Activated CD4-positive, alpha-beta memory T cell treated with anti-CD3 and anti-CD28 coated beads for 36 hours (primary cell): ENCODE measurements at regions of chr14 and their contacts with region 1.

Region 1: GRCh38 chr14:64303471-64303917 is 9.3 kb upstream of the ESR2 start:
- DNase-seq: no peak
- H3K4me3 Mint-ChIP-seq: no peak overlapping the region
- H3K27ac Mint-ChIP-seq: no peak overlapping the region
- H3K4me1 Mint-ChIP-seq: no peaks in the 10 kb centered on the region
- H3K27me3 Mint-ChIP-seq: peaks cover 6% of the 10 kb centered on the region

Region 2: GRCh38 chr14:63388763-63389431 is 914.6 kb before region 1 on chr14:
- CTCF ChIA-PET with region 1: no interaction called
- POLR2A ChIA-PET with region 1: no interaction called
- intact Hi-C with region 1: loop called (anchors 1 kb)
- DNase-seq: peak; percentile 76
- H3K4me3 Mint-ChIP-seq: no peak overlapping the region
- H3K27ac Mint-ChIP-seq: no peak overlapping the region
- H3K4me1 Mint-ChIP-seq: peaks cover under 1% of the 10 kb centered on the region
- H3K27me3 Mint-ChIP-seq: no peaks in the 10 kb centered on the region

Region 3: DNA sequence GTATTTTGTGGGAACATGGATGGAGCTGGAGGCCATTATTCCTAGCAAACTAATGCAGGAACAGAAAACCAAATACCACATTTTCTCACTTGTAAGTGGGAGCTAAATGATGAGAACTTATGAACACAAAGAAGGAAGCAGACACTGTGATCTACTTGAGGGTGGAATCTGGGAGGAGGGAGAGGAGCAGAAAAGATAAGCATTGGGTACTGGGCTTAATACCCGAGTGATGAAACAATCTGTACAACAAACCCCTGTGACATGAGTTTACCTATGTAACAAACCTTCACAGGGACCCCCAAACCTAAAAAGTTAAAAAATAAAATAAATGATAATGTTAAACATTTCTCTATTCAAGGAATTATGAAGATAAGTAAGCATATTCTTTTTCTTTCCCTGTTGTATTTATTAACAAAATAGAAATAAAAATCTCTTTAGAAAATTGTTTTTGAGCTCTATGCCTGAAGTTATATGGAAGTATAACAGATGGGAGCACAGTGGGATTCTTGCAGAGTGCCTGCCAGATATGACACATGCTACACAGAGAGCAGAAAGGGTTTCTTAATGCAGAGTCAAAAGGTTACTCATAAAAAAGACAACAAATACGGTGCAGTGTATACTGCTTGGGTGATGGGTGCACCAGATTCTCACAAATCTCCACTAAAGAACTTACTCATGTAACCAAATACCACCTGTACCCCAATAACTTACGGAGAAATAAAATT is 502.7 kb before region 1 on chr14:
- CTCF ChIA-PET with region 1: interaction called, 26 read pairs
- POLR2A ChIA-PET with region 1: no interaction called
- intact Hi-C with region 1: loop called (anchors 2 kb)
- DNase-seq: no peak
- H3K4me3 Mint-ChIP-seq: no peak overlapping the region
- H3K27ac Mint-ChIP-seq: no peak overlapping the region
- H3K4me1 Mint-ChIP-seq: no peaks in the 10 kb centered on the region
- H3K27me3 Mint-ChIP-seq: no peaks in the 10 kb centered on the region

Region 4: DNA sequence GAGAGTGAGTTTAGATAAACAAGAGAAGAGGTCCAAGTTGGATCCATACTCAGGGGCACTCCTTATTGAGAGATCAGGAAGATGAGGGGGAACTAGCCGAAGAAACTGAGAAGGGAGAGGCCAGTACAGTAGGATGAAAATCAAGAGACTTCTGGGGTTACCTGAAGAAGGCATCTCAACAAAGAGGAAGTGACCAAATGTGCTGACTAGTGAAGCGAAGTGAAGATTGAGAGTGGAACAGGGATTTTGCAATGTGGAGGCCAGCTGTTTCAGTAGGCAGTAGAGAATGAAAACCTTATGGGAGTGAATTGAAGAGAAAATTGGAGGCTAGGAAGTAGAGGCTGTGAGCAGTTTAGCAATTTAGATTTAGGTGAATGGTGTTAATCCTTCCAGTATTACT is 297.7 kb before region 1 on chr14:
- CTCF ChIA-PET with region 1: interaction called, 14 read pairs
- POLR2A ChIA-PET with region 1: no interaction called
- intact Hi-C with region 1: loop called (anchors 1 kb)
- DNase-seq: no peak
- H3K4me3 Mint-ChIP-seq: no peak overlapping the region
- H3K27ac Mint-ChIP-seq: no peak overlapping the region
- H3K4me1 Mint-ChIP-seq: no peaks in the 10 kb centered on the region
- H3K27me3 Mint-ChIP-seq: no peaks in the 10 kb centered on the region

Region 5: GRCh38 chr14:64012720-64013119 is 290.8 kb before region 1 on chr14:
- CTCF ChIA-PET with region 1: interaction called, 14 read pairs
- POLR2A ChIA-PET with region 1: no interaction called
- intact Hi-C with region 1: loop called (anchors 1 kb)
- DNase-seq: no peak
- H3K4me3 Mint-ChIP-seq: no peak overlapping the region
- H3K27ac Mint-ChIP-seq: no peak overlapping the region
- H3K4me1 Mint-ChIP-seq: peaks cover 9% of the 10 kb centered on the region
- H3K27me3 Mint-ChIP-seq: no peaks in the 10 kb centered on the region

Region 6: GRCh38 chr14:64178814-64179213 is 124.7 kb before region 1 on chr14:
- CTCF ChIA-PET with region 1: interaction called, 10 read pairs
- POLR2A ChIA-PET with region 1: no interaction called
- intact Hi-C with region 1: no loop called
- DNase-seq: no peak
- H3K4me3 Mint-ChIP-seq: no peak overlapping the region
- H3K27ac Mint-ChIP-seq: no peak overlapping the region
- H3K4me1 Mint-ChIP-seq: peaks cover 29% of the 10 kb centered on the region
- H3K27me3 Mint-ChIP-seq: no peaks in the 10 kb centered on the region

Region 7: GRCh38 chr14:64410084-64410774 is 106.7 kb after region 1 on chr14:
- CTCF ChIA-PET with region 1: no interaction called
- POLR2A ChIA-PET with region 1: no interaction called
- intact Hi-C with region 1: no loop called
- DNase-seq: no peak
- H3K4me3 Mint-ChIP-seq: no peak overlapping the region
- H3K27ac Mint-ChIP-seq: no peak overlapping the region
- H3K4me1 Mint-ChIP-seq: peaks cover 12% of the 10 kb centered on the region
- H3K27me3 Mint-ChIP-seq: no peaks in the 10 kb centered on the region

Region 8: DNA sequence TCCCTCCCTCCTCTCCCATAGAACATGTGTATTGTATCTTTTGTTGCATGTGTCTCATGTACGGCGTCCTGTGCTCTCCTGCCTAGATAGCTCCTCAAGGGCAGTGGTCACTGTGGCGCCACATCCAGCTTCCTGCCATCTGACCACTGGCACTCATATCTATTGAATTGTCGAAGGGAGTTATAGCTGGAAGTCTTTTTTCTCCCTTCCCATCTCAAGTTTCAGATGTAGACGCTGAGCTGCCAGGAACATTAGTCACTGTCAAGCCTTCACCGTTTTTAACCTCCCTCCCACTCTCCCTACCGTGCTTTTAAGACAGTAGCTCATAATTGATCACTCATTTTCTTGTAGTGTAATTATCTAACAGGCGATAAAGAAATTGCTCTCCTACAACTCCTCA is 117.7 kb after region 1 on chr14:
- CTCF ChIA-PET with region 1: no interaction called
- POLR2A ChIA-PET with region 1: no interaction called
- intact Hi-C with region 1: no loop called
- DNase-seq: no peak
- H3K4me3 Mint-ChIP-seq: no peak overlapping the region
- H3K27ac Mint-ChIP-seq: no peak overlapping the region
- H3K4me1 Mint-ChIP-seq: peaks cover 25% of the 10 kb centered on the region
- H3K27me3 Mint-ChIP-seq: no peaks in the 10 kb centered on the region